HepG2 (cell line): ENCODE measurements at regions of chr10 and their contacts with region 1.

Region 1: DNA sequence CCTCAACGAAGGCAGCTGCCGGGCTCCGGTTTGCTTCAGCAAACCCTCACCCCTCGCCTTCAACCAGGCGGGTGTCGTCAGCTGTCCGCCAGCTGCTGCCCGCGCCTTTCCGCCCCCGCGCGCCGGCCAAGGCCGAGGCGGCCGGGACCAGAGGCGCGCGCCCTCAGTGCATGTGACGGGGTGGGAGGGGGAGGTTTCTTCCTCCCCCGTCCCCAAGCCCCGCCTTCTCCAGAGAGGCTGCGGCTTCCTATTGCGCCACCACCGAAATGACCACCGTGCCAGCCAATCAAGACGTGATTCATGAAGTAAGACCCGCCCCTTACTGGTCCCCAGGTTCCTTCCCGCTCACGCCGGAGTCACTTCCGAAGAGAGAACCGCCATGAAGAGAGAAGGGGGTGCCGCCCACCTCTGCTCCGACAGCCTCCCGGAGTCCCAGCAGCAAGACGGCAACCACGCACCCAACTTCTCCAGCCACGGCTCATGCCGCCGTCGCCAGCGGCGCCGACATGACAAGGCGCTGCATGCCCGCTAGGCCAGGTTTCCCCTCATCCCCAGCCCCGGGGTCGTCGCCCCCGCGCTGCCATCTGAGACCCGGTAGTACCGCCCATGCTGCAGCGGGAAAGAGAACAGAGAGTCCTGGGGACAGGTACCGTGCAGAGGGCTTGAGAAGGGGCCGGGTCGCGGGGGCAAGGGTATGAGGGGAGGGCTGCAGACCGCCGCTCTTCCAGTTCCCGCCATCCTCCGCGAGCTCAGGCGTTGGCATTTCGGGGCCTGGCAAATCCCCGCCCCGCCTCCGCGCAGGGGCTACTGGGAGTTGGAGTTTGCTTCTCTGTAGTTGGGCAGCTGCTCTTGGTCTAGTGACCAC is at the start of gene SLF2:
- DNase-seq: peak; percentile 97
- ATAC-seq: peak; percentile 94
- H3K4me3 ChIP-seq: peak within 1 kb of the TSS; percentile 77 to 96 (median 92)
- H3K27ac ChIP-seq: peak within 1 kb of the TSS; percentile 85
- H3K4me1 ChIP-seq: peaks cover 67% of the 10 kb centered on the region
- H3K27me3 ChIP-seq: no peaks in the 10 kb centered on the region
- CTCF ChIP-seq: no peak; the same call in 1 of the 2 replicates
- EP300 ChIP-seq: no peak; a peak in 1 of 4 replicates
- POLR2A ChIP-seq: peak; percentile 63 to 74
- RAD21 ChIP-seq: peak; percentile 30; the same call in 1 of the 2 replicates
- total RNA-seq, gene SLF2: 48.1 and 59.8 TPM in 2 replicates

Region 2: DNA sequence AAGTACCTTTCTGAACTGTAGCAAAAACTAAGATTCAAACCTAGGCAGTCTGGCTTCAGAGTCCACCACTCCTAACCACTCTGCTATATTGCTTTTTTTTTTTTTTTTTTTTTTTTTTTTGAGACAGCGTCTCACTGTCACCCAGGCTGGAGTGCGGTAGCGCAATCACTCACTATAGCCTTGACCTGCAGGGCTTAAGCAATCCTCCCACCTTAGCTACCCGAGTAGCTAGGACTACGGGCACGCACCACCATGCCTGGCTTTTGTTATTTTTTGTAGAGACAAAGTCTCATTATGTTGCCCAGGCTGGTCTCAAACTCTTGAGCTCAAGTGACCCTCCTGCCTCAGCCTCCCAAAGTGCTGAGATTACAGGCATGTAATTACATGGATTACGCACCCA is 10.2 kb before region 1 on chr10:
- CTCF ChIA-PET with region 1: no interaction called
- POLR2A ChIA-PET with region 1: interaction called, 10 read pairs
- in situ Hi-C with region 1: no loop called
- intact Hi-C with region 1: no loop called
- DNase-seq: peak; percentile 62
- ATAC-seq: peak; percentile 81
- H3K4me3 ChIP-seq: no peak overlapping the region
- H3K27ac ChIP-seq: peak overlapping the region; percentile 57
- H3K4me1 ChIP-seq: peaks cover 64% of the 10 kb centered on the region
- H3K27me3 ChIP-seq: no peaks in the 10 kb centered on the region; a peak in 1 of 5 replicates
- CTCF ChIP-seq: no peak
- EP300 ChIP-seq: peak in 1 of 2 experiments; percentile 55; a peak in 2 of 4 replicates
- POLR2A ChIP-seq: no peak
- RAD21 ChIP-seq: no peak